Common myeloid progenitor, CD34-positive (primary cell): ENCODE measurements at regions of chr3 and their contacts with region 1.

Region 1: GRCh38 chr3:190513409-190514162 is at the start of gene IL1RAP:
- DNase-seq: peak; percentile 84 to 90 (median 90)
- H3K4me3 ChIP-seq: peak within 1 kb of the TSS; percentile 65 to 99 (median 84)
- H3K27ac ChIP-seq: no peak within 1 kb of the TSS
- H3K4me1 ChIP-seq: peaks cover 7 to 45% (median 16%) of the 10 kb centered on the region in 4 experiments
- H3K27me3 ChIP-seq: peaks cover 0 to 66% (median 24%) of the 10 kb centered on the region in 5 experiments

Region 2: DNA sequence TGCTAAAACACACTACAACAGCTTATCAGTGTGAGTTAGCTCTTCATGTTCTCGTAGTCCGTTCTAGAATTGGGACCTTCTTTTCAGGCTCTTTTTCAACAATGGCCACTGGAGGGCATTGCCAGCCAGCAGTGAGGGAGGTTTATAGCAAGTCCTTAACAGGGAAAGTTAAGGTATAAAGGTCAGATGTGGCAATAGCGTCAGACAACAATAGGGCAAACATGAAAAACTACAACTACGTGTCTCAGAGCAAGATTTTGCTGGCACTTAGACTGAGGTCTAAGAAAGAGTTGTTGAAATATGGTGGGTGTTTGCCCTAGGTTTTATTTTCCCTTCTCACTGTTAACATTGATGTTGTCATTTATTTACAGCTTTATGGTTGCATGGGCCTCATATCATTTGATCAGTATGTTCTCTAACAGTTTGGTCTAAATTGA is 187.5 kb after region 1 on chr3:
- CTCF ChIA-PET with region 1: interaction called, 34 read pairs
- POLR2A ChIA-PET with region 1: no interaction called
- DNase-seq: peak; percentile 31 to 61 (median 60)
- H3K4me3 ChIP-seq: no peak overlapping the region
- H3K27ac ChIP-seq: no peak overlapping the region
- H3K4me1 ChIP-seq: peaks cover 0 to 8% (median 0%) of the 10 kb centered on the region in 4 experiments
- H3K27me3 ChIP-seq: peaks cover 0 to 30% (median 3%) of the 10 kb centered on the region in 5 experiments